ENCODE measurements at regions of chr1 and their contacts with region 1.

Region 1: DNA sequence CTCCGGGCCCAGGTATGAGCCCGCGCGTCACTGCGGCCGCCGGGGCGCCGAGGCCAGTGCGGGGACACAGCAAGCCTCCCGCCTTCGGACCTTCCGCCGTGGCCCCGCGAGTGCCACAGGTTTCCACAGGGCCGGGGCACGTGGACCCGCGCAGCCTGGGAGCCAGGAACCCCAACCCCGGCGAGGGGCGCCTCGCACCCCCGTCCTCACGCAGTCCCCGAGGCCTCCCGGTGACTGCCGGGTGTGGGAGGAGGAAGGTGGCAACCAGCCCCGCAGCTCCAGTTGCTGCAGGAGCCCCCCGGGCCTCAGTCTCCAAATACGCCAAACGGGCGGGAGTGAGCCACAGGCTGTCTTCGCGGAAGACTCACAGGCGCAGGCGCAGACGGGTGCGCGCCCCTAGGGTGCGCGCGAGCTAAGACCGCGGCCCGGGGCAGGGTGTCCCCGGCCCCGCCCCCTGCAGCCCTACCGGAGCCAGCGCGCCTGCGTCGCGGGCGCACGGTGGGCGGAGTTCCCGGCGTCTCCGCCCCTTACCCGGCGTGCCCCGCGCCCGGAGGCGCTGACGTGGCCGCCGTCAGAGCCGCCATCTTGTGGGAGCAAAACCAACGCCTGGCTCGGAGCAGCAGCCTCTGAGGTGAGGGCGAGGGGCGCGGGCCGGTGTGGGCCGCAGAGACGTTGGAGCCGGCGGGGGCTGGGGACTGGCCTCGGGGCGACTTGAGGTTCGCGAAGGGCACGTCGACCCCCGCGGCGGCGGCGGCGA is at the start of gene ARF1:
- DNase-seq: peak; percentile 88 to 96
- H3K4me3 ChIP-seq: peak within 1 kb of the TSS; percentile 98
- H3K4me3 Mint-ChIP-seq: peak within 1 kb of the TSS; percentile 93
- H3K27ac Mint-ChIP-seq: peak within 1 kb of the TSS; percentile 95
- H3K4me1 ChIP-seq: peaks cover 23% of the 10 kb centered on the region
- H3K4me1 Mint-ChIP-seq: peaks cover 14% of the 10 kb centered on the region
- H3K27me3 ChIP-seq: no peaks in the 10 kb centered on the region
- H3K27me3 Mint-ChIP-seq: no peaks in the 10 kb centered on the region
- CTCF ChIP-seq: no peak
- total RNA-seq, gene ARF1: 374 and 378 TPM in 2 replicates

Region 2: GRCh38 chr1:228059634-228060457 is 22.5 kb before region 1 on chr1:
- CTCF ChIA-PET with region 1: no interaction called
- POLR2A ChIA-PET with region 1: interaction called, 11 read pairs
- intact Hi-C with region 1: loop called (anchors 2 kb)
- DNase-seq: peak; percentile 96 to 99
- H3K4me3 ChIP-seq: peak overlapping the region; percentile 60
- H3K4me3 Mint-ChIP-seq: peak overlapping the region; percentile 73
- H3K27ac Mint-ChIP-seq: no peak overlapping the region
- H3K4me1 ChIP-seq: no peaks in the 10 kb centered on the region
- H3K4me1 Mint-ChIP-seq: no peaks in the 10 kb centered on the region
- H3K27me3 ChIP-seq: no peaks in the 10 kb centered on the region; the same call in 1 of the 2 replicates
- H3K27me3 Mint-ChIP-seq: peaks cover 20% of the 10 kb centered on the region
- CTCF ChIP-seq: no peak

Region 3: GRCh38 chr1:228101994-228102790 is 19.9 kb after region 1 on chr1:
- CTCF ChIA-PET with region 1: interaction called, 3 read pairs
- POLR2A ChIA-PET with region 1: interaction called, 3 read pairs
- intact Hi-C with region 1: loop called (anchors 2 kb)
- DNase-seq: peak; percentile 79 to 81
- H3K4me3 ChIP-seq: peak overlapping the region; percentile 98
- H3K4me3 Mint-ChIP-seq: peak overlapping the region; percentile 93
- H3K27ac Mint-ChIP-seq: peak overlapping the region; percentile 97
- H3K4me1 ChIP-seq: peaks cover 23% of the 10 kb centered on the region
- H3K4me1 Mint-ChIP-seq: peaks cover 14% of the 10 kb centered on the region
- H3K27me3 ChIP-seq: no peaks in the 10 kb centered on the region
- H3K27me3 Mint-ChIP-seq: no peaks in the 10 kb centered on the region
- CTCF ChIP-seq: peak in 1 of 2 experiments; percentile 45

Region 4: DNA sequence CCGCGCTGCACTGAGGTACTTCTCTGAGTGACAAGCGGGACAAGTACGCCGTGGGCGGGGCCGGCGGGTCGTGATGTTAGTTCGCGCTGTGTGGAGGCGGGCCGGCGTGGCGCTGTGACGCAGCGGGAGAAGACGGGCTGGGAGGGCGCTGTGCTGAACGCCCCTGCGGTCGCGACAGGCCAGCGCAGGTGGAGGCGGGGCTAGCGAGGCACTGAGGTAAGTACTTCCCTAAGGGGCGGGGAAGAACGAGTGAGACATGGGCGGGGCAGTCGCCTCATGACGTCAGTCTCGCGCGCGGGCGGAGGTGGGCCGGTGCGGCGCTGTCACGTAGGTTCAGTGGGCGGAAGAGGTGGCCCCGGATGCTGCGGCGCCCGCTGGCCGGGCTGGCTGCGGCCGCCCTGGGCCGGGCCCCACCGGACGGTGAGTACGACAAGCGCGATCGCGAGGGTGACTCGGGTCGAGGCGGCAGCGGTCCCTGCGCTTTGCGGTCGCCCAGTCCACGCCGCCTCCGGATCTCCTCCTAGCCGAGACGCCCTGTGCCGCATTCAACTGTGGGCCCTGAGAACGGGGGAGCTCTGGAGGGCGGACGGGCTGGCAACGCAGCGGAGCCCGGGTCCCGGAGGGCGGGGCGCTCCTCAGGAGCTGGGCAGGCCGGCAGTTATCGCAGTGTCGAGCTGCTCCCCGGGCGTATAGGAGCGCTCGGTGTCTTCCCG is 57.8 kb after region 1 on chr1 and contains the start of gene GUK1:
- CTCF ChIA-PET with region 1: no interaction called
- POLR2A ChIA-PET with region 1: no interaction called
- intact Hi-C with region 1: loop called (anchors 2 kb)
- DNase-seq: peak; percentile 100
- H3K4me3 ChIP-seq: peak within 1 kb of the TSS; percentile 90
- H3K4me3 Mint-ChIP-seq: peak within 1 kb of the TSS; percentile 85
- H3K27ac Mint-ChIP-seq: peak within 1 kb of the TSS; percentile 91
- H3K4me1 ChIP-seq: peaks cover 5% of the 10 kb centered on the region
- H3K4me1 Mint-ChIP-seq: no peaks in the 10 kb centered on the region
- H3K27me3 ChIP-seq: no peaks in the 10 kb centered on the region
- H3K27me3 Mint-ChIP-seq: no peaks in the 10 kb centered on the region
- CTCF ChIP-seq: peak in 1 of 2 experiments; percentile 23
- total RNA-seq, gene GUK1: 73.6 and 74.4 TPM in 2 replicates